ENCODE measurements at regions of chr7 and their contacts with region 1.

Region 1: DNA sequence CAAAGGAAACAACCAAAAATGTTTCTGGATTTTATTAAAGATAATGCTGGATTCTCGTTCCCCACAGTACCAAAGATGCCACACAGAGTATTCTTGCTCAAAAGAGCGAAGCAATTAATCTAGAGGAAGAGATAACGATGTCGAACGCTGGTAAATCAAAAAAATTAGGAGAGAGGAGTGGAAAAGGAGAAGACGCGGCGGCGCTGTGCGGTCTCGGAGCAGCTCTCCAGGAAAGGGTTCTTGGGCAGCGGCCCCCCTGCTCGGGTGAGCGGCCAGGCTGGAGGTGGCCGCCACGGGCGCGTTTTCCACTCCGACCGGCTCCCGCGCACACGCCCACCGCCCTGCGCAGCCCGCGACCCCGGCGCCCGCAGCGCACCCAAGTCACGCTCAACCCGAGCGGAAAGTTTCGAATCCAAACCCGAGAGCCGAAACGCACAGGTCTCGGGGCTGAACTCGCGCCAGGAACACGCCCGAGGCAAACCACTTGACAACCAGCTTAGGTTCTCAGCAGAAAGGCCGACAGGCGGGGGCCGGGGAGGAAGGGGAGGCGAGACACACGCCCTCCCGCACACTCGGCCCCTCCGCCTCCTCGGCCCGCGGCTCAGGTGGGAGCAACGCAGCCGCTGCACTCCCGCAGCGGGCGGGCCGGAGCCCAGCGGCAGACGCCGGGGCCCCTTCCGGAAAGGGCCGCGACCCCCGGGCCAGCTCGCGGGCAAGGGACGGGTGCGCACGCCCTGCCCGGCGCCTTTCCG is 924 bp downstream of the SRPK2 start:
- DNase-seq: peak; percentile 42 to 92 (median 54)

Region 2: GRCh38 chr7:105013221-105013815 is 374.5 kb before region 1 on chr7:
- intact Hi-C with region 1: loop called (anchors 5 kb)
- DNase-seq: peak; percentile 95 to 99 (median 97)

Region 3: DNA sequence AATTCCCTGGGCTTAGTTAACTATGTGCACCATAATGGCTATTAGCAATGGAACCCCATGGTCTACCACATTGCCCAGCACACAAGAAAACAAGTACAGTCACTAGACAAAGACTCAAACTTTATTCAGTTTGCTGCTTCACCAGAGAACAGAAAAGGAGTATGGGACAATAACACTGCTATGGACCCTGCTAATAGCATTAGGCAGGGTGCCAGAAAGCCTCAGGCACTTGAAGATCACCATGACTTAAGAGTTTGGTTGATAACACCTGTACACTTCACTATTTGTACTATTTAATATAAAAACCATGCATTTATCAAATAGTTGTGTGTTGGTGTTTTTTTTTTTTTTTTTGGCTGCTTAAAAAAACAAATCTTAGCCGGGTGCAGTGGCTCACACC is 214.2 kb before region 1 on chr7:
- intact Hi-C with region 1: no loop called
- DNase-seq: no peak

Region 4: GRCh38 chr7:105532709-105533460 is 145.1 kb after region 1 on chr7:
- intact Hi-C with region 1: no loop called
- DNase-seq: no peak